ENCODE measurements at regions of chr9 and their contacts with region 1.

Region 1: DNA sequence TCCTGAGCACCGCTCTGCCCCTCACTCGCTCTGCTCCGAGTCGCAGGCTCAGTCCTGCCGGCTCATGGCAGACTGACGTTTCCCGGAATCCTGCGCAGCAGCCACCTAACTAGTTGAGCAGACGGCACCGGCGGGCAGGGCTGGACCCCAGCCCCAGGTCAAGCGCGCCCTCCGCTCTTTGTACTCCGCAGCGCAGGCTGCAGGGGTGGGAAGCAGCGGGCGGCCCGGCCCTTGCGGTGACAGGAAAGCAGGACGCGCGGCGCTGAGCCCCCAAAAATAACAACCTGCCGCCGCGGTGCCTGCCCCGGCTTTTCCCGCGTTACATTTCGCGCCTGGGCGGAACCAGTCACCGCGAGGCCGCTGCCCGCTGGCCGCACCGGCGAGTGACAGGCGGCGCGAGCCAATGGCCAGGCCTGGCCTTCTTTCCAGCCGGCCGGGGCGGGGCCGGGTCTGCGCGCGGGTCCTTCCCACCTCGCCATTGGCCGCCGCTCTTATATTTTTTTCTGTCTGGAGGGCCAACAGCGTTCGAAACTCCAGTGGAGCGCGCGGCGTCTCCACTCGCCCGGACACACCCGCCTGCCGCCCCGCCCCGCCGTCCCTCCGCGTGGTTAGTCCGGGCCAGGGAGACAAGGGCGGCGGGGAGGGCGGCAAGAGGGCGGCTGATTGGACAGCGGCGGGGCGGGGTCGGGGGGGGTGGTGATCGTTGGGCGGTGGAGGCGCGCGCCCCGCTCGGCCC is at the start of gene ZNF367:
- DNase-seq: peak; percentile 93
- H3K4me3 Mint-ChIP-seq: peak within 1 kb of the TSS; percentile 94
- H3K27ac Mint-ChIP-seq: peak within 1 kb of the TSS; percentile 95
- H3K4me1 Mint-ChIP-seq: peaks cover 43% of the 10 kb centered on the region
- H3K27me3 Mint-ChIP-seq: no peaks in the 10 kb centered on the region
- total RNA-seq, gene ZNF367: 21.8 and 22.0 TPM in 2 replicates

Region 2: DNA sequence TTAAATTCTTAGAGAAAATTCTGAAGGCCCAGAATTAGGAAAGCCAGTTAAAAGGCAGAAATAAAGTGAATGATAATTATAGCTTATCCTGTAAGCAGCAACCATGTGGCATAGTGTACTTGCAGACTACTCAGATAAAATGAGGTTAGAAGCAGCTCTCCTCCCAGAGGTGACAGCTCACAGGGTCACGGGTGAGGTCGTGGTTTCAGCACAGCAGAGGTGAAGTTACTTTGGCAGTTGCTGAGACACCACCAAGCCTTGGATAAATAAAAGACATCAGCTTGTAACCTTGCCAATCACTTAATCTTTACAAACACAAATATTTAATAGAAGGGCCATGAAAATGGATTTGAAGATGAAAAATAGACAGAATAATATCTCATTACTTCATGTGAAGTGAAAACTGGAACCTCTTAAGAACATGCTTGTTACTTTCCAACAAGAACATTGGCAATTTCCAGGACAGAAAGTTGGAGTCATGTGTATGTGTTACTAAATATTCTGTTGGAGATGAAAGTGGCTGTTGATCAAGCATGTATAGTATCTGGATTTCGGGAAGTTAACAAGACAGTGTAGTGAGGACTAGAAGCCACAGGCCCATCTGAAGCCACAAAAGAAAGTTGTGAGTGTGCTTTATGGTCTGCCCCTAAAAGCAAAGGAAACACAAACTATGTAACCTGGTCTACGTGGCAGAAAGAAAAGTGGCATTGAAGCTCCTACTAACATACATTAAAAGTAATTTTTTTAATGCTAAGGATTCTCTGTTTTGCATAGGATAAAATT is 408.4 kb before region 1 on chr9:
- intact Hi-C with region 1: loop called (anchors 10 kb)
- DNase-seq: peak; percentile 75
- H3K4me3 Mint-ChIP-seq: peak overlapping the region; percentile 54
- H3K27ac Mint-ChIP-seq: peak overlapping the region; percentile 96
- H3K4me1 Mint-ChIP-seq: peaks cover 55% of the 10 kb centered on the region
- H3K27me3 Mint-ChIP-seq: no peaks in the 10 kb centered on the region

Region 3: GRCh38 chr9:96398582-96399324 is 19.5 kb before region 1 on chr9:
- intact Hi-C with region 1: loop called (anchors 2 kb)
- DNase-seq: no peak
- H3K4me3 Mint-ChIP-seq: peak overlapping the region; percentile 59
- H3K27ac Mint-ChIP-seq: peak overlapping the region; percentile 86
- H3K4me1 Mint-ChIP-seq: peaks cover 43% of the 10 kb centered on the region
- H3K27me3 Mint-ChIP-seq: no peaks in the 10 kb centered on the region

Region 4: GRCh38 chr9:96566498-96567207 is 148.4 kb after region 1 on chr9:
- intact Hi-C with region 1: loop called (anchors 1 kb)
- DNase-seq: peak; percentile 67
- H3K4me3 Mint-ChIP-seq: peak overlapping the region; percentile 79
- H3K27ac Mint-ChIP-seq: peak overlapping the region; percentile 72
- H3K4me1 Mint-ChIP-seq: peaks cover 26% of the 10 kb centered on the region
- H3K27me3 Mint-ChIP-seq: peaks cover 14% of the 10 kb centered on the region

Region 5: GRCh38 chr9:96844040-96844439 is 425.8 kb after region 1 on chr9:
- intact Hi-C with region 1: no loop called
- DNase-seq: no peak
- H3K4me3 Mint-ChIP-seq: no peak overlapping the region
- H3K27ac Mint-ChIP-seq: no peak overlapping the region
- H3K4me1 Mint-ChIP-seq: peaks cover 12% of the 10 kb centered on the region
- H3K27me3 Mint-ChIP-seq: no peaks in the 10 kb centered on the region

Region 6: DNA sequence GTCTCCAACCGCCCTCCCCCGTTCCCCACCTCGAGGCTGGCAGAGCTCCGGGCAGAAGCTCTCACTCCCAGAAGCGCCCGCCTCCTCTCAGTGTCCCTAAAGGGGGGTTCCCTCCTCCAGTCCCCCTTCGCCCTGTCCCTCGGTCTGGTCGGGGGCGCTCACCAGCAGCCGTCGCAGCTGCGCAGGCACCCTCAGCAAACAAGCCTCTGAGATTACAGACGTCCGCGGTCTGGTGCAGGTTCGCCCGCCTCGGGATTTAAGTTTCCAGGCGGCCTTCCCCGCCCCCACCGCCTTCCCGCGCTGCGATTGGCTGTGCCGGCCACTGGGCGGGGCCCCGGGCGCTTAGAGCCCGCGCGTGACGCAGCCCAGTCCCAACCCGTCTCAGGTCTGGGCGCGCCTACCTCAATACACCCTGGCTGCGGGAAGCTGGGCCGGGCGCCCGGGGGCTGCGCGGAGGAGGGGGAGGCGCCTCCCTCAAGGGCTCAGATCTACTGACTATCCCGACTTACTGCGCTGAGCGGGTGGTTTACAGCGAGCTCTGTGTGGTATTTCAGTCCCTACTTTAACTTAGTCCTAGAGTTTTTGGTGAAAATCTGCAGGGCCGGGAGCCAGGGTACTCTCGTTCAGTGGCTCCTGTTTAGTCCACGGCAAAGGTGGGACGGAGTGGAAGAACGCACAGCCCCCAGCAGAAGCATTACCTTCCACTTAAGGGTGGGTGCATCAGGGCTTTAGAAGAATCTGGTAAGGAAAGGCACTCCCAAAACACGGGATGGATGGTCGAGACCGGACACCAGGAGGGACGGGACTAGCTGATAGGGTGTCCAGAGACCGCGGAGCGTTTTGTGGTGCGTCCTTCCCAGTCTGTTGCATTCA is 620.9 kb after region 1 on chr9 and contains the start of gene CTSV:
- intact Hi-C with region 1: loop called (anchors 10 kb)
- DNase-seq: peak; percentile 79
- H3K4me3 Mint-ChIP-seq: peak within 1 kb of the TSS; percentile 85
- H3K27ac Mint-ChIP-seq: no peak within 1 kb of the TSS
- H3K4me1 Mint-ChIP-seq: peaks cover 5% of the 10 kb centered on the region
- H3K27me3 Mint-ChIP-seq: peaks cover 45% of the 10 kb centered on the region
- total RNA-seq, gene CTSV: 0.24 and 0.31 TPM in 2 replicates

Measured in activated T-helper 1 cell treated with anti-CD3 and anti-CD28 coated beads, Interleukin-12 subunit alpha, Interleukin-12 subunit beta, Interleukin-2, Interleukin-4 antibody, amounts not matched to agents 30 ng/mL and 10 ng/mL and 1 ng/mL, durations not matched to agents 14 hours and 24 hours and 36 hours (primary cell).